Ascending aorta (tissue), 2 donors: ENCODE measurements at regions of chrX and their contacts with region 1.

Region 1: GRCh38 chrX:54808605-54809483 is 1.3 kb downstream of the MAGED2 start:
- DNase-seq: peak; percentile 84 to 95
- H3K4me3 ChIP-seq: peak overlapping the region; percentile 56 to 66
- H3K27ac ChIP-seq: peak overlapping the region; percentile 82 to 88
- H3K4me1 ChIP-seq: peaks cover 0 to 9% of the 10 kb centered on the region in 2 donors
- H3K27me3 ChIP-seq: no peaks in the 10 kb centered on the region
- CTCF ChIP-seq: no peak

Region 2: GRCh38 chrX:53088136-53088974 is 1720.5 kb before region 1 on chrX:
- intact Hi-C with region 1: loop called (anchors 5 kb)
- DNase-seq: peak; percentile 66 to 88
- H3K4me3 ChIP-seq: peak overlapping the region; percentile 38 to 60
- H3K27ac ChIP-seq: peak overlapping the region; percentile 82 to 96
- H3K4me1 ChIP-seq: peaks cover 0 to 2% of the 10 kb centered on the region in 2 donors
- H3K27me3 ChIP-seq: no peaks in the 10 kb centered on the region
- CTCF ChIP-seq: no peak

Region 3: GRCh38 chrX:54044126-54044876 is 764.5 kb before region 1 on chrX and contains the start of gene PHF8:
- intact Hi-C with region 1: loop called (anchors 5 kb)
- DNase-seq: peak; percentile 78 to 97
- H3K4me3 ChIP-seq: peak within 1 kb of the TSS; percentile 64 to 73
- H3K27ac ChIP-seq: peak within 1 kb of the TSS; percentile 85 to 96
- H3K4me1 ChIP-seq: no peaks in the 10 kb centered on the region
- H3K27me3 ChIP-seq: no peaks in the 10 kb centered on the region
- CTCF ChIP-seq: no peak
- total RNA-seq, gene PHF8: 41.6 TPM

Region 4: DNA sequence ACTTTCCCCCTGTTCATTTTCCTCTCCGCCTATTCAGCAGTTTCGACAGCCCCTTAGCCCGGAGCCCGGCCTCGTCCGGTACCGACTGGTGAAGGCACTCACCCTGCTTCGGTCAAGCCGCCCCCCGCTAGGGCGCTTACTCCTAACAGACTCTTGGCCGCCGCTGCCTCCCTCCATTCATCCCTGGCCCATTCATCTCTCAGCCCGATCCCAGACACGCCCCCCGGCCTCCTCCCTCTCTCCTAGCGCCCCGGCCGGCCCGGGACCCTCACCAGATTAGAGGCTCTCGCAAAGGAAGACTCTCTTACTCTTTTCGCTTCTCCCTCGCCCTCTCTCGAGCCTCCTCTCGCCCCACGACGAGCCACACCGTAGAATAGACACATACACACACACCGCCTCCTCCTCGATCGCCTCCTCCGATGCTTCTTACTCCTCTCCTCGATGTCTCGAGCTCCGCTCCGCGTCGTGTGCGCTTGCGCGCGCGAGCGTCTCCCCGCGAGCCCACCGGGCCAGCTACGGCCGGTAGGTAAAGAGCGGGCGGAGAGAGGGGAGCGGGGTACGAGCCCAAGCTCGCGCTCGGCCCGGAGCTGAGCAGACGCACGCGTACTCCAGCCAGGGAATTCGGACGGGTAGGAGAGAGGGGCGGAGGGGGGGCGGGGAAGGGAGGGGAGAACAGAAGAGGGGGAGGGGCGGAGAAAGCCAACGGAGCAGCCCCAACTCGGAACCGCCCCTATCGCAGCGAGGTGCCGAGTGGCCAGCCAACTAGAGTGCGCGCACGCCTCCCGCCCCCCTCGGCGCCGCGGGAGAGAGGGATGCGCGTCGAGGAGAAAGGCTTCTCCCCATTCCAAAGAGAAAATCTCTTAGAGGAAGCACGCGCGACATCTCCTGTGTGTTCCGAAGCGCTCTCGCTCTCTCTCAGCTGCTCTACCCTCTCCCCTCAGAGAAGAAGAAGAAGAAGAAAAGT is 451.1 kb before region 1 on chrX and contains the start of gene WNK3:
- intact Hi-C with region 1: loop called (anchors 5 kb)
- DNase-seq: peak; percentile 18 to 86
- H3K4me3 ChIP-seq: peak within 1 kb of the TSS; percentile 56 to 67
- H3K27ac ChIP-seq: peak within 1 kb of the TSS; percentile 84 to 86
- H3K4me1 ChIP-seq: no peaks in the 10 kb centered on the region
- H3K27me3 ChIP-seq: no peaks in the 10 kb centered on the region
- CTCF ChIP-seq: no peak
- total RNA-seq, gene WNK3: 3.3 TPM

Region 5: DNA sequence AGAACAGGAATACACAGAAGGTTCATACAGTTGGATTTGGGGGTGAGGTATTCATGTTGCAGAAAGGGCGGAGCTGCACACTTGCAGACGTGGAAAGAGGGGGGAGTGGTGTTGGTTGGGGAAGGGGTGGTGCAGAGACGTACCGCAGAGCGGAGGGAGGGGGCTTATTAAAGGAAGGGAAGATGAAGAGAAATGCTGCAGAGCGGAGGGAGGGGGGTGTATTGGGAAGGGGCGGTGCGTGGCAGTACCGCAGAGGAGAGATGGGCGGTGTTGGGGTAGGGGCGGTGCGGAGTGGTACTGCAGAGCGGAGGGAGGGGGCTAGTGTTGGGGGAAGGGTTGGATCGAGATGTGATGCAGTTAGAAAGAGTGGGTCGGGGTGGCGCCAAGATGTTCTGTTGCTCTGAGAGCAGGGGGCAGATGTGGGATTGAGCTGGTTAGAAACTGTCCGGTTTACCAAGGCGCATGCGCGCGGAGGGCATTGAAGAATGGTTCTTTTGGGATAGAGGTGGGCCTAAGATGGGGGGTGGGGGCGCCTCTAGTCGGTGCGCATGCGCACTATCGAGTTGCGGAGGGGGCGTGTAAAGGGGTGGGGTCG is 112.7 kb after region 1 on chrX:
- intact Hi-C with region 1: loop called (anchors 5 kb)
- DNase-seq: no peak
- H3K4me3 ChIP-seq: peak overlapping the region; percentile 48 to 58
- H3K27ac ChIP-seq: peak overlapping the region; percentile 31 to 42
- H3K4me1 ChIP-seq: no peaks in the 10 kb centered on the region
- H3K27me3 ChIP-seq: no peaks in the 10 kb centered on the region
- CTCF ChIP-seq: peak in 1 of 3 experiments; percentile 3

Region 6: GRCh38 chrX:55160685-55161552 is 352.1 kb after region 1 on chrX:
- intact Hi-C with region 1: loop called (anchors 2 kb)
- DNase-seq: peak; percentile 55 to 92
- H3K4me3 ChIP-seq: peak overlapping the region; percentile 46 to 68
- H3K27ac ChIP-seq: peak overlapping the region; percentile 87 to 89
- H3K4me1 ChIP-seq: no peaks in the 10 kb centered on the region
- H3K27me3 ChIP-seq: no peaks in the 10 kb centered on the region
- CTCF ChIP-seq: peak; percentile 24 to 51 (median 51)